Left cardiac atrium (tissue), 4 donors: ENCODE measurements at regions of chr16 and their contacts with region 1.

Region 1: DNA sequence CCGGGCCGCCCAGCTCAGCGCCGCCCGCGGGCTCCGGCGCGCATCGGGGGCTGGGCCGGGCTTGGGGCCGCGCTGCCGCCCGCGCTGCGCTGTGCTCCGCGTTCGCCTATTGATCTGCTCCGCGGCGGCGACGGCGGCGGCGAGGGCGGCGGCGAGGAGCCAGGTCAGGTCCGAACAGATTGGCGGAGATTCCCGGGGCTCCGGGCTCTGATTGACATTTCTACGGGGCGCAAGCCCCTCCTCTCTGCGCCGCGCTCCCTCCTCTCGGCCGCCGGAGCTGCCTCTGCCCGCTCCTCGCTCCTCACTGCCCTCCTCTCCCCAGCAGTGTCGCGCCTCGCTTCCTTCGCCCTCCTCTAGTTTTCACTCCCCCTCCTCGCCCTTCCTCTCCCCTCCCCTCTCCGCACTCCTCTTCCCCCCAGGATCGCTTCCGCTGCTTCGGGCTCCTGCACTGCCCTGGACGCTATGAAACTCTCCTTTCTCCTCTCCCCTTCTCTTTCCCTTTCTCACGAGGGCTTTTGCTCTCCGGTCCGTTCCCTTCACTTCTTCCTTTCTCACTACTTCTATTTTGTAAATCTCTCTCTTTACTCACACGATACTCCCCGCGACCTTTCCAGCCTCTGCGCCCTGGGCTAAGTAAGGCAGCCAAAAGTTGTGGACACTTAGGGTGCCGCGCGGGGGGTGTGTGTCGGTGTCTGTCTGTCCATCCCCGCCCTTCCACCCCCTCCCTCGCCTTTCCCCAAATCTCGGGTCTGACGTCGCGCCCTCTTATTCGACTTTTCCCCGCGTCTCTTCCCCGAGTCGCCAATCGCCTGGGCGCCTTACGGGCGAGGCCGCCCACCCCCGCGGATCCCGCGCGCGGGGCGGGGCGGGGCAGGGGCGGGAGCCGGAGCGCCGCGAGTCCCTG is at the start of gene IRX3:
- DNase-seq: peak; percentile 91
- ATAC-seq: peak; percentile 79 to 85
- total RNA-seq, gene IRX3: 5.0 to 6.2 TPM

Region 2: DNA sequence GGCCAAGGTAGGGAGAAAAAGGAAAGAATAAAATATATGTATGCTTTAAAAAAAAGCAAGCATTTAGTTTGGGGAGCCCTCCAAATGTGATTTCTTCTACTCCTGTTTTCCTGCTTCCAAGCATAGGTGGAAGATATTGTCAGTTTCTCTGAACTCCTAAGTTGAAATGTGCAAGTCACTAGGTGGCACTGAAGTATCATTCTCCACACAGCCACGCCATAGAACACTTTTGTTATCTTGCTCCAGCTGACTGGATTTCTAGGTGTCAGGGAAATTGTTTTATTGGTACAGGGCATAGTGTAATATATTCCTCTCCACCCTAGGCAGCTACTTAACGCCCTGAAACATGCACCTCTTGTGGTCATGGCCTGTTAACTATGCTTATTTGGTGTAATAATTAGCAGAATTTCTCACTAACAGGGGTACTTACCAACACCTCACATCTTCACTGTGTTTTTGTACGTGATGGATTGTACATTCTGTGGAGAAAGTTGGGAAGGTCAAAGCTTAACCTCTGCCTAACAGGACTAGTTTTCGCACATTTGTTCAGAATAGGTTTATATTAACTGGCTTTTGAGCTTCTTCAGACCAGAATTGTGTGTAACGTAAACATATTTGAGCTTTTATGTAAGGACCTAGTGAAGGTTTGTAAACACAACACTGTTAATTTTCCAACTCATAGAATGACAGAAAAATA is 513.0 kb before region 1 on chr16:
- intact Hi-C with region 1: loop called in 1 of 2 experiments (anchors 10 kb)
- DNase-seq: no peak
- ATAC-seq: peak; percentile 80 to 84

Region 3: GRCh38 chr16:53892155-53892554 is 394.2 kb before region 1 on chr16:
- intact Hi-C with region 1: loop called in 1 of 2 experiments (anchors 5 kb)
- DNase-seq: peak; percentile 30
- ATAC-seq: peak; percentile 71 to 75

Region 4: DNA sequence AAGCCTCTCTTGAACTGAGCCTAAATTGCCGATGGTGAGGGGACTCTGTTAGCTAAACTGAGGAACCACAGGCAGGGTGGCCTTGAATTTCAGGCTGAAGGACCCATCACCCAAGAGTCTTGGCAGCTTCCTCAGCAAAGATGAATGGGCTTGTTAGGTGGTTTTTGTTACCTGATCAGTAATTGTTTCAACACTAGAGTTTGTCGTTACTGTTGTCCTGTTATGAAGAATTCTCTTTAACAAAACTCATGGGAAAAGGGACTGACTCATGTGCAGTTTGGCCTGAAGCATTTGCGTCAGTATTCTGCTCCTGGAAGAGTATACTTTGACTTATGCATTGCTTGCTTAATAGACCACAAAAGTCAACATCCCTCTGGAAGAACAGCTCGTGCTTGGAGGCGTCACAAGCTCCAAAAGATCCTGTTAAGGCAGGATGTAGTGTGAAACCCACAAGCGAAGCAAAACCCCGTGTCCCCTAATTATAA is 205.8 kb before region 1 on chr16:
- intact Hi-C with region 1: no loop called
- DNase-seq: no peak
- ATAC-seq: no peak

Region 5: GRCh38 chr16:54503011-54503855 is 216.9 kb after region 1 on chr16:
- intact Hi-C with region 1: loop called in 1 of 2 experiments (anchors 10 kb)
- DNase-seq: peak; percentile 69
- ATAC-seq: peak; percentile 93 to 96

Region 6: GRCh38 chr16:54712866-54713265 is 426.5 kb after region 1 on chr16:
- intact Hi-C with region 1: no loop called
- DNase-seq: no peak
- ATAC-seq: no peak

Region 7: DNA sequence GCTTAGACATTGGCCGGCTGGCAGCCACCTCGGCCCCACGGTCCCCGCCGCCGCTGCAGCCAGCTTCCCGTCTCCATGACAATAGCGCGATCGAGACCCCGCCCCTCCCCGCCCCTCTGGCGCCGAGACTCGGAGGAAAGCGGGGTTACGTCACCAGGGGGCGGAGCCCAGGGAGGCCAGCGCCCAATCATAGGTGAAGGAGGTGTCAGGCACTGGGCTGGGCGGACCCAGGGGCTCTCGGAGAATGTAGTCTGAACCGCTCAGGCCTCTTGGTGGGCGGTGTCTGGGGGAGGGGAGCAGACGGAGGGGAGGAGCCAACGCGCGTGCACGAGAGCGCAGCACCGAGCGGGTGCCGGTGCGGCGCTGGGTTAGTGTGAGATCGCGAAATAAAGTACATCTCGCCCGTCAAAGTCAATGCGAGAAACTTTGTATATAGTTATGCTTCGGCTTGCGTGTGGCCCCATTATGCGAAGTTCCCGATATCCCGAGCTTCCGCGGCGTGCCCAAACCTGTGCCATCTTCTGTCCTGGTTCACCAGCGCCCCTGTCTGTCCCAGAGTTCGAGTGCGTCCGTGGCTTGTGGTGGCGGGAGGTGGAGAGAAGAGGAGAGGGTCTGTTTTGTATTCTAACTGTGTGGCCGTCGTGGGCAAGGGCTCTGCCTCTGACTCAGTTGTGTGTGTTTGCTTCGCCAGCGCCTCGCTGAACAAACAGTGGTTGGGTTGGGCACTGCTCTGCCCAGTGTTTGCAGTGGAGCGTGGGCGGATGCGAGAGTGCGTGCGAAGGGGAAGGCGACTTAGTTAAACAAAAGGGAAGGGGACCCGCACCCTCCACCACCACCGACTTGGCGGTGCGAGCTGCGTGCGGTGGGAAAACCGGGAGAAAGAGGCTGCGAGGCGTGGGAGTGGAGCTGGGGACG is 643.0 kb after region 1 on chr16:
- intact Hi-C with region 1: loop called (anchors 10 kb)
- DNase-seq: peak; percentile 100
- ATAC-seq: peak; percentile 94 to 97